Activated CD4-positive, alpha-beta memory T cell treated with anti-CD3 and anti-CD28 coated beads, Interleukin-2, amount 10 ng/mL, durations not matched to agents 7 days and 5 days (primary cell): ENCODE measurements at regions of chr1 and their contacts with region 1.

Region 1: DNA sequence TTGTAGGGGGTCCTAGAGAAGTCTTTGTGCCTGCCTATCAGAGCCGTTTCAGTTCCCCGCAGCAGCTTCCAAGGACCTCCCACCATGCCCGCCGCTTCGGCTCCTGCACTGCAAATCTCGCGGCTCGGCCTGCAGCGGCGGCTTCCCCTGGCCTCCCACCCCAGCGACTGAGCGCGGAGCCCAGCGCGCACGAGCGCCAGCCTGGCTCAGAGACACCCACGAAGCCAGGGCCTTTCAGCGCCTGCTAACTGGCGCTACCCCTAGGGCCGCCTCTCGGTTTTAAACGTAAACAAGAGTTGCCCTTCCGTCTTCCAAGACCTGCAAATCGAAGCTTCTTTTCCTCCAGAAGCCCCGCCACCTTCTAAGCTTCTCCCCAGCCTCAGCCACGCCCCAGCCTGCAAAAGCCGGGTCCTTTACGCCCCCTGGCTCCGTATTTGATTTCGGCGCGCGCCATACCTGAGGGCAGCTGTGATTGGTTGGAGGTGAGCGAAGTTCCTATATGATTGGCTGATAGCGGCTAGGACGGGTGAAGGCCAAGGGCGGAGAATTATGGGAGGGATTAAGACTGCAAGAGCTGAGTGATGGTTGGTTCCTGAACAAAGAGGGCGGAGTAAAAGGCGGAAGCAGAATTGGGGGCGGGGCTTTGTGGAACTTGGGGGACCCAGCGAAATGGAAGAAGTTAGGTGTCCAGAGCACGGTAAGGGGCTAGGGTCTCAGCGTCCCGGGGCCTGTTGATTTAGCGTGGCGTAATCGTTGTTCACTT is at the start of gene TTF2:
- DNase-seq: peak; percentile 98
- H3K4me3 Mint-ChIP-seq: no peak within 1 kb of the TSS
- H3K27ac Mint-ChIP-seq: no peak within 1 kb of the TSS
- H3K4me1 Mint-ChIP-seq: peaks cover 61% of the 10 kb centered on the region
- H3K27me3 Mint-ChIP-seq: no peaks in the 10 kb centered on the region
- total RNA-seq, gene TTF2: 78.0 to 83.8 TPM

Region 2: GRCh38 chr1:116737020-116737854 is 322.6 kb before region 1 on chr1:
- CTCF ChIA-PET with region 1: interaction called, 38 read pairs
- POLR2A ChIA-PET with region 1: interaction called, 93 read pairs
- DNase-seq: peak; percentile 85
- H3K4me3 Mint-ChIP-seq: peak overlapping the region; percentile 68
- H3K27ac Mint-ChIP-seq: peak overlapping the region; percentile 99
- H3K4me1 Mint-ChIP-seq: peaks cover 57% of the 10 kb centered on the region
- H3K27me3 Mint-ChIP-seq: no peaks in the 10 kb centered on the region

Region 3: DNA sequence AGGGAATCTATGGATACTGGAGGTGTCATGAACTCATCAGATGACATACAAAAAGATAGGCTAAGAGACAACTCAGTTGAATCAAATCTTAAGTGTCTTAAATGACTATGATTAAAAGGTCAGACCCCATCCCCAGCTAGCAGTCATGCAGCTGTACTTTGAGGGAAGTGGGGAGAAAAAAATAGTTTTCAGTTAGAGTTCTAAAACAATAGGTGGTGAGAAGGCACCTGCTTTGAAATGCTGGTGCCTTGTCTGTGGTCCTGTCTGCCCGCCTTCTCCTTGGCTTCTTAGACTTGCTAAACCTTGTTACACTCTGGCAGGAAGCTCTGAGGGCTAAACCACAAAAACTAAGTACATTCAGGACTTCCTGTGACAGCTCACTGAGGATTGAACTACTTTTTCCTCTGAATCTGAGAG is 290.3 kb before region 1 on chr1:
- CTCF ChIA-PET with region 1: interaction called, 7 read pairs
- POLR2A ChIA-PET with region 1: interaction called, 84 read pairs
- DNase-seq: peak; percentile 82
- H3K4me3 Mint-ChIP-seq: peak overlapping the region; percentile 49
- H3K27ac Mint-ChIP-seq: peak overlapping the region; percentile 99
- H3K4me1 Mint-ChIP-seq: peaks cover 89% of the 10 kb centered on the region
- H3K27me3 Mint-ChIP-seq: no peaks in the 10 kb centered on the region

Region 4: DNA sequence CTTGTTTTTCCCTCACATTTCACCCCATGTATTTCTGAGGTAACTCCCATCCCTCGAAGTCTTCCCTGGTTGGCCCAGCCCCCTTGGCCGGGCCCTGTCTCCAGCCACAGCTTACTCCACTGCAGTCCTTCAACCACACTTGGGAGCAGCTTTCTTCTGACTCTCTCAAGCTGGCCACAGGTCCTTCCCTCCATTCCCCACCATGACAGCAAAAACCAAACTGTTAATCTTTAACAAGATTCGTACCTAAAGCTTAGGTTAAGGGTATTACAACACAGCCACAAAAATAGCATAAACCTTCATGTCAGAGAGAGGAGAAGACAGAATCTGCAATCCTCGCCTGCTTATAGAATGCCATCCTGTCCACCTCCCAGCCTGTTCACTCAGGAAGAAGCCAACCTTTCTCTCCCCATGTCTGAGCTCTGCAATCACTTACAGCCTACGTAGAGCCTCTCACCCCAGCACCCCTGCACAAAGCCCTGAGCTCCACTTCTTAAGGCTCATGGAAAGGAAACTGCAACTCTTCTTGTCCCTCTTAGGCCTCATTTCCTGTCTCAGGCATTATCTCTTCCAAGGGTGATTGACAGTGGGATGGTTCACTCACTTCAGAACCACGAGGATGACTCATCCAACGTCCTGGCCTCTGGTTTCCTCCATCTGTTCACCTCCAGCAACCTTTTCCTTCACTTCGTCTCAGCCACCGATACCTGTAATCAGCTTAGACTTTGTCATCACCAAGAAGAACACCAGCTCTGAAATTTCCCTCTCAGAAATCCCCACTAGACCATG is 232.8 kb before region 1 on chr1:
- CTCF ChIA-PET with region 1: interaction called, 4 read pairs
- POLR2A ChIA-PET with region 1: interaction called, 17 read pairs
- DNase-seq: peak; percentile 77
- H3K4me3 Mint-ChIP-seq: peak overlapping the region; percentile 58
- H3K27ac Mint-ChIP-seq: peak overlapping the region; percentile 96
- H3K4me1 Mint-ChIP-seq: peaks cover 55% of the 10 kb centered on the region
- H3K27me3 Mint-ChIP-seq: no peaks in the 10 kb centered on the region

Region 5: DNA sequence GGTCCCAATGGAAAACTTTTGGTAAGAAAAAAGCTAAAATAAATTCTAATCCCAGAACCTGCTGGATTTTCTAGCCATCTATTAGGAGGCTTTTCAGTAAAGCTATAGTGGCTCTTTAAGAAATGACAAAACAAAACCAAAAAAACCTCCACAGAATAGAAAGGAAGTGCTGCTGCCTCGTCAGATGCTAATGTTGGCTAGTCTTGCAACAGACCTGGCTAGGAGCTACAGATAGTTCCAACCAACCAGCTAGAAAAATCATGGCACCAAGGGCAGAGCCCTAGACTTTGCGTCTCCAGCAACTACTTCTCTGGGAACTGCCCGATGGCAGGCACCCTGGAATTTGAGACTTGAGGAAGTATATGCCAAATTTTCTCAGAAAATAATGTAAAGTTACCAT is 50.7 kb before region 1 on chr1:
- CTCF ChIA-PET with region 1: interaction called, 4 read pairs
- POLR2A ChIA-PET with region 1: interaction called, 10 read pairs
- DNase-seq: no peak
- H3K4me3 Mint-ChIP-seq: no peak overlapping the region
- H3K27ac Mint-ChIP-seq: peak overlapping the region; percentile 2
- H3K4me1 Mint-ChIP-seq: peaks cover 17% of the 10 kb centered on the region
- H3K27me3 Mint-ChIP-seq: peaks cover 13% of the 10 kb centered on the region

Region 6: GRCh38 chr1:117260761-117261423 is 201.0 kb after region 1 on chr1:
- CTCF ChIA-PET with region 1: no interaction called
- POLR2A ChIA-PET with region 1: no interaction called
- DNase-seq: no peak
- H3K4me3 Mint-ChIP-seq: no peak overlapping the region
- H3K27ac Mint-ChIP-seq: no peak overlapping the region
- H3K4me1 Mint-ChIP-seq: no peaks in the 10 kb centered on the region
- H3K27me3 Mint-ChIP-seq: peaks cover 2% of the 10 kb centered on the region

Region 7: GRCh38 chr1:117605774-117606648 is 546.2 kb after region 1 on chr1 and contains the start of gene TENT5C:
- CTCF ChIA-PET with region 1: no interaction called
- POLR2A ChIA-PET with region 1: interaction called, 11 read pairs
- DNase-seq: peak; percentile 99
- H3K4me3 Mint-ChIP-seq: peak within 1 kb of the TSS; percentile 97
- H3K27ac Mint-ChIP-seq: peak within 1 kb of the TSS; percentile 95
- H3K4me1 Mint-ChIP-seq: peaks cover 46% of the 10 kb centered on the region
- H3K27me3 Mint-ChIP-seq: peaks cover 17% of the 10 kb centered on the region
- total RNA-seq, gene TENT5C: 64.5 to 66.1 TPM